Endothelial cell of umbilical vein (primary cell): ENCODE measurements at regions of chr12 and their contacts with region 1.

Region 1: DNA sequence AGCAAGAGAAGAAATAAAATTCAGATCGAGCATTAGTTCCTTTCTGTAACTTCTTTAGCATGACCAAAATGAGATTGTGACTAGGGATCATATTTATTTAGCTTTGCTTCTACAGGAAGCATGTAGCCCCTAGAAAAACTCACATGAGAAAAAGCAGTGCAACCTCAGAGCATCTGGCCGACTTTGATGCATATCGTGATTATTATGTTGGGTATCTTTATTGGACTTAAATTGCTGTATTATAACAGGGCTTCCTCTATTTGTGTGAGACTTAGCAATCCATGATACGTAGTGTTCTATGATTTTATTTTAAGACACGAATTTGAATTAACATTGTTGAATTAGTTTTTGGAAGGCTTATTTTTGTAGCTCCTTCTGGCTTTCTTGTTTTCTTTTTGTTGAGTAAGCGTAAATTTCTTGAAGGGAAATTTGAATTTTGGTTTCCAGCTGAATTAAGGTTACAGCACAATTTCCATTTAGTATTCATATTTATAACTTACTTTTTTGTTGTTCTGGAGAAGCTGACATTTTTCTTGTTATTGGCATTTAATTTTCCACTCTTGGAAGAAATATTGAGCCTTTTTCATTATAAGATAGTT is 33.9 kb downstream of the WASHC4 start:
- DNase-seq: no peak
- H3K4me3 ChIP-seq: no peak overlapping the region
- H3K27ac ChIP-seq: no peak overlapping the region
- H3K4me1 ChIP-seq: no peaks in the 10 kb centered on the region
- H3K27me3 ChIP-seq: no peaks in the 10 kb centered on the region
- CTCF ChIP-seq: no peak
- POLR2A ChIP-seq: no peak

Region 2: GRCh38 chr12:103947871-103948555 is 1193.4 kb before region 1 on chr12:
- CTCF ChIA-PET with region 1: no interaction called
- POLR2A ChIA-PET with region 1: no interaction called
- dilution Hi-C with region 1: no loop called
- intact Hi-C with region 1: loop called (anchors 10 kb)
- DNase-seq: no peak
- H3K4me3 ChIP-seq: no peak overlapping the region
- H3K27ac ChIP-seq: no peak overlapping the region
- H3K4me1 ChIP-seq: no peaks in the 10 kb centered on the region
- H3K27me3 ChIP-seq: no peaks in the 10 kb centered on the region
- CTCF ChIP-seq: no peak
- POLR2A ChIP-seq: no peak

Region 3: GRCh38 chr12:105158876-105159275 is 17.5 kb after region 1 on chr12:
- CTCF ChIA-PET with region 1: interaction called, 6 read pairs
- POLR2A ChIA-PET with region 1: no interaction called
- dilution Hi-C with region 1: no loop called
- intact Hi-C with region 1: loop called (anchors 2 kb)
- DNase-seq: no peak
- H3K4me3 ChIP-seq: no peak overlapping the region
- H3K27ac ChIP-seq: no peak overlapping the region
- H3K4me1 ChIP-seq: no peaks in the 10 kb centered on the region
- H3K27me3 ChIP-seq: no peaks in the 10 kb centered on the region
- CTCF ChIP-seq: no peak
- POLR2A ChIP-seq: no peak

Region 4: GRCh38 chr12:105171691-105172436 is 30.4 kb after region 1 on chr12:
- CTCF ChIA-PET with region 1: no interaction called
- POLR2A ChIA-PET with region 1: no interaction called
- dilution Hi-C with region 1: no loop called
- intact Hi-C with region 1: loop called (anchors 2 kb)
- DNase-seq: no peak
- H3K4me3 ChIP-seq: no peak overlapping the region
- H3K27ac ChIP-seq: no peak overlapping the region
- H3K4me1 ChIP-seq: no peaks in the 10 kb centered on the region
- H3K27me3 ChIP-seq: no peaks in the 10 kb centered on the region
- CTCF ChIP-seq: no peak
- POLR2A ChIP-seq: no peak

Region 5: GRCh38 chr12:105192624-105193225 is 51.3 kb after region 1 on chr12:
- CTCF ChIA-PET with region 1: no interaction called
- POLR2A ChIA-PET with region 1: no interaction called
- dilution Hi-C with region 1: no loop called
- intact Hi-C with region 1: no loop called
- DNase-seq: no peak
- H3K4me3 ChIP-seq: no peak overlapping the region
- H3K27ac ChIP-seq: no peak overlapping the region
- H3K4me1 ChIP-seq: no peaks in the 10 kb centered on the region
- H3K27me3 ChIP-seq: no peaks in the 10 kb centered on the region
- CTCF ChIP-seq: no peak
- POLR2A ChIP-seq: no peak